Left ventricle myocardium superior (tissue), 1 donor: ENCODE measurements at regions of chr5 and their contacts with region 1.

Region 1: GRCh38 chr5:174935854-174936474 is 211.6 kb downstream of the MSX2 start:
- DNase-seq: peak; percentile 68
- ATAC-seq: peak; percentile 81

Region 2: GRCh38 chr5:174418928-174419796 is 516.8 kb before region 1 on chr5:
- intact Hi-C with region 1: loop called (anchors 10 kb)
- DNase-seq: peak; percentile 93
- ATAC-seq: peak; percentile 98